ENCODE measurements at regions of chr3 and their contacts with region 1.

Region 1: DNA sequence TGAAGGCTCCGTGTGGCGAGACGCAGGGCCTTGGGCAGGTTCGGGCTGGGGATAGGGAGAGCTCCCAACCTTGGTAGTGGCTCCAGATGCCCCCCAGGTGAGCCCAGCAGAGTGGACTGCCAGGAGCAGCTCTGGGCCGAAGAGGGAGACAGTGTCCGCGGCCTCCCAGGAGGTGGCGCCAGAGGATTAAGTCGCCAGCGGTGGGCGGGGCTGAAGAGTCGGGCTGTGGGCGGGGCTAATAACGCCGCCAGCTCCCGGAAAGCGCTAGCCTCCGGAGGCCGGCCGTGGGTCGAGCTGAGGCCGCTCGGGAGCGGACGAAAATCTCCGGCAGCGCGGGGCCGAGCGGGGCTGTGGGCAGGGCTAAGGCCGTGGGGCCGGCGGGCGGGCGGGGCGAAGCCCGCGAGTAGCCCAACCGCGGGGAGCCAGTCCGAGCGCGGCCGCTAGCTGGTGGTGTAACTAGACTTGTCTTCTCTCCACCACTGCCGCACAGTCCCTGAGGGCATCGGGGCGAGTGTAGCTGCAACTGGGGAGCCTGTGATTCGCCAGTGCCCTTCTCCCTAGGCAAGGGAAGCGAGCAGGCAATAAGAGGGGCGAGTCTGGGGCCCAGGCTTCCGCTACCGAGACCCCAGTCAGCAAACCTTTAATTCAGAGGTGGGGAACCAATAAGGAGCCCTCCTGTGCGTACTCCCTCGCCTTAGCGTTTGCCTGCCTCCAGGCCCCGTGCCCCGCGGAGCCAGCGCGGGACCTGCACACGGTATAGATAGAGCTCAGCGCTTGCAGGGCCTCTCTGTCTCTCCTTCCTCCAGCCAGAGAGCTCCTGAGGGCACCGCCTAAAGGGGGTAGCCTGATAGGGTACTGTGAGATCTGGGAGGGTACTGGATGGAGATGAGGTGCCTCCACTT is 14.4 kb upstream of the BSN start:
- DNase-seq: peak; percentile 97
- ATAC-seq: peak; percentile 86
- H3K4me3 Mint-ChIP-seq: peak overlapping the region; percentile 72
- H3K27ac Mint-ChIP-seq: 0 out of 2 replicates have a peak overlapping the region, but pooled peaks have one; percentile 41
- H3K4me1 Mint-ChIP-seq: peaks cover 19% of the 10 kb centered on the region
- H3K27me3 Mint-ChIP-seq: peaks cover 23% of the 10 kb centered on the region
- CTCF ChIP-seq: peak; percentile 80

Region 2: DNA sequence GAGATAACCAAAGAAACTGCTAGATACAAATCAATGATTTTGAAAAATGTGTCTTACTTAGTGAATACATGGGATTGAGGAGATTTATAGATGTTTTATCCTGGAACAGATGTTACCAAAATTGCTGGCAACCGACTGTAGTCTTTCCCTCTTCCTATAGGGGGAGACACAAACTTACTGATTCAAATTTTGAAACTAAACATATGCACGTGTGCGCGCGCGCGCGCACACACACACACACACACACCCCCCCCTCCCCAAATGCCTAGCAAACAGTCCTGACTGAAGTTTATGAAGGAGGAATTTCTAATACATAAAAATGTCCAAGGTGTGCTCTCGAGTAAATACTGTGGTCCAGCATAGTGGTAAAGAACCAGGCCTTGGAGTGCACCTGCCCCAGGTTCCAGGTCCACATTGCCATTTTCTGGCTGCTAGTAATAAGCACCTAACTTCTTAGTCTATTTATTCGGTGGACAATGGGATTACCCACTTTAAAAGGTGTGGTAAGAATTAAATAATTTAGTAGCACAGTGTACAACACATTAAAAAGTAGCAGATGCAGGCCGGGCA is 244.3 kb before region 1 on chr3:
- CTCF ChIA-PET with region 1: no interaction called
- POLR2A ChIA-PET with region 1: no interaction called
- DNase-seq: peak; percentile 18
- ATAC-seq: no peak
- H3K4me3 Mint-ChIP-seq: no peak overlapping the region
- H3K27ac Mint-ChIP-seq: no peak overlapping the region
- H3K4me1 Mint-ChIP-seq: no peaks in the 10 kb centered on the region
- H3K27me3 Mint-ChIP-seq: no peaks in the 10 kb centered on the region
- CTCF ChIP-seq: peak; percentile 50; the same call in 1 of the 2 replicates

Region 3: DNA sequence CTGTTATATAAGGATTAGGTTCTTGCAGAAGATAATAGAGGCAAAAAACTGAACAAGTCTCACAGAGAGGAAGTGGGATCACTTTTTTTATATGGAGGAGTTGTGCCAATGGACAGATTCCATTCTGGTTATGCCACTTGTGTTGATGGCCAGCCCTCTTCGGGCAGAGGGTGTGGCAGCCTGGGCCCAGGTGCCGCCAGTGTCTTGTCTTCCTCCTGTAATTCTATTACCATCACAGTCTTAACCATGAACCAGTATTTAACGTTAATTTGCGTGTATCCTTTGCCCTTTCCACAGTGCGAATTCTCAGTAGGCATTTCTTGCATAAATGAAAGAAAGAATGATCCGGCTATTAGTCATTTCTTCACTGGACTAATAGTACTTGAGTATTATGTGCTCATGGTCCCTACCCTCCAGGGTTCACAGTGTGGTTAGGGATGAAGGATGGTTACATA is 193.1 kb before region 1 on chr3:
- CTCF ChIA-PET with region 1: no interaction called
- POLR2A ChIA-PET with region 1: no interaction called
- DNase-seq: no peak
- ATAC-seq: no peak
- H3K4me3 Mint-ChIP-seq: no peak overlapping the region
- H3K27ac Mint-ChIP-seq: no peak overlapping the region
- H3K4me1 Mint-ChIP-seq: peaks cover 2% of the 10 kb centered on the region; the same call in 1 of the 2 replicates
- H3K27me3 Mint-ChIP-seq: no peaks in the 10 kb centered on the region
- CTCF ChIP-seq: no peak

Region 4: DNA sequence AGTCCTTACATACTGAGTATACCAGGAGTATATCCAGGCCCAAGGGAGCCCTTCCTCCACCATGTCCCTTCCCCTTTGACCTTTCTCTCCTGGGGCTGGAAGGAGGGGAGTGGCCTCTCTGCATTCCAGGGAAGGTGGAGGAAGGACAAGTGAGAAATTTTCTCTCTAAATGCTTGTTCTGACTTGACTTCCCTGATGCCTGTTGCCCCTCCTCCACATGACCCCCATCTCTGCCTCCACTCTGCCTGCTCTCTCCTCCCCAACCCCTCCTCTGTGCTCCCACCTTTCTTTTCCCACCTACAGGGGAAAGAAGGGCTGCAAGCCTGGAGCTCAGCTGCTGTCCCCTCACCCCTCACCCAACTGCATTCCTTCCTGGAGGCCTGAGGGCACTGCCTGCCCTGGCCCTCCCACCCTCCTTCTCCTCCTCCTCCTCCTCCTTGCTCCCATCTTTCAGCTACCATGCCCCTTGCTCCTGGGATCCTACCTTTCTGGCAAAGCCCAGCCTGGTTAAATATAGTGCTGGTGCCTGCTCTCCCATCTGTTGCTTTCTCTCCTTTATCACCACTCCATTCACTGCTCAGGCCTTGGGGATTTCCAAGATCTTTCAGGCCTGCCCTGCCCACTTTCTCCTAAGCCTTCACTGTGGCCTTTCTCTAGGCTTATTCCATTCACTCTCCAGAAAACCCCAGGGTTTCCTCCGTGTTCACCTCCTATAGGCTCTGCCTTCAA is 78.3 kb before region 1 on chr3:
- CTCF ChIA-PET with region 1: interaction called, 23 read pairs
- POLR2A ChIA-PET with region 1: interaction called, 4 read pairs
- DNase-seq: peak; percentile 67
- ATAC-seq: peak; percentile 79
- H3K4me3 Mint-ChIP-seq: peak overlapping the region; percentile 26
- H3K27ac Mint-ChIP-seq: peak overlapping the region; percentile 99
- H3K4me1 Mint-ChIP-seq: peaks cover 47% of the 10 kb centered on the region
- H3K27me3 Mint-ChIP-seq: no peaks in the 10 kb centered on the region; the same call in 1 of the 2 replicates
- CTCF ChIP-seq: no peak

Region 5: DNA sequence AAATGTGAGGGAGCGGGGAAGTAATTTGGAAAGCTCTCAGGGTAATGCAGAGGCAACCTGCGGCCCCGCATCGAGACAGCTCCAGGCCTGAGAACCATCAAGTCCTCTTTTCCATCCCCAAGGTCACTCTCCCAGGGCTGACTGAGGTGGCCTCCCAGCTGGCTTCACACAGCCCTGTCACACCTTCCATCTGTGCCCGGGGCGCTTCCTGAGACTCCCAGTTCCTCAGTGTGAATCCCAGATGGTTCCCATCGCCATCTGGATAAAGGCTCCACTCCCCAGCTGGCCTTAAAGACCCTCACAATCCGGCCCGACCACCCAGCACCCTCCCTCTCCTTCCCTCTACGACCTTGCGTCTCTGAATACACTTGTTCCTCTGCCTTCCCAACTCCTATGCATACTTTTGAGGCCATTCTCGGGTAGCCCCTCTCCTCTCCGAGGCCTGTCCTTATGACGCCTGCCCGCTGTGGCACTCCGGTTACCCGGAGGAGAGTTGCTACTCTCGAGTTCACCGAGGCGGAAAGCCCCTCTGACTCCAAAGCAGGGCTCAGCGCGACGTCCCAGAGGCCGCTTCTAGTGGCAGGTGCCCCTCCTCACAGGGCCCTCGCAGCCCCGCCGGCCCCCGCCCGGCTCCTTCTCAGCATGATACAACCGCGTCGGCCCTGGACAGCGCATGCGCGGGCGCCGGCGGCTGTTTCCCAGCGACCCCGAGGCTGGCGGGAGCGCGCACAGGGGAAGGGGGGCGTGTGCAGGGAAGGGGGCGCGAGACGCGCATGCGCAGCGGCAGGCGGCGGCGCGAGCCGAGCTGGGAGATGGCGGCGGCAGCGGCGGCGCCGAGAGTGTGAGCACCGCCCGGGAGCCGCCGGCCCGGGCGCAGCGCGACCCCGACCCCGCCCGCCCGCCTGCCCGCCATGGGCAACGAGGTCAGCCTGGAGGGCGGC is 14.1 kb after region 1 on chr3 and contains the start of gene BSN:
- CTCF ChIA-PET with region 1: interaction called, 70 read pairs
- POLR2A ChIA-PET with region 1: interaction called, 14 read pairs
- DNase-seq: peak; percentile 93
- ATAC-seq: peak; percentile 75
- H3K4me3 Mint-ChIP-seq: peak within 1 kb of the TSS; percentile 99
- H3K27ac Mint-ChIP-seq: peak within 1 kb of the TSS; percentile 97
- H3K4me1 Mint-ChIP-seq: peaks cover 17% of the 10 kb centered on the region
- H3K27me3 Mint-ChIP-seq: peaks cover 25% of the 10 kb centered on the region
- CTCF ChIP-seq: no peak
- total RNA-seq, gene BSN: 1.7 to 2.8 TPM (median 2.4 TPM) in 3 replicates

Region 6: DNA sequence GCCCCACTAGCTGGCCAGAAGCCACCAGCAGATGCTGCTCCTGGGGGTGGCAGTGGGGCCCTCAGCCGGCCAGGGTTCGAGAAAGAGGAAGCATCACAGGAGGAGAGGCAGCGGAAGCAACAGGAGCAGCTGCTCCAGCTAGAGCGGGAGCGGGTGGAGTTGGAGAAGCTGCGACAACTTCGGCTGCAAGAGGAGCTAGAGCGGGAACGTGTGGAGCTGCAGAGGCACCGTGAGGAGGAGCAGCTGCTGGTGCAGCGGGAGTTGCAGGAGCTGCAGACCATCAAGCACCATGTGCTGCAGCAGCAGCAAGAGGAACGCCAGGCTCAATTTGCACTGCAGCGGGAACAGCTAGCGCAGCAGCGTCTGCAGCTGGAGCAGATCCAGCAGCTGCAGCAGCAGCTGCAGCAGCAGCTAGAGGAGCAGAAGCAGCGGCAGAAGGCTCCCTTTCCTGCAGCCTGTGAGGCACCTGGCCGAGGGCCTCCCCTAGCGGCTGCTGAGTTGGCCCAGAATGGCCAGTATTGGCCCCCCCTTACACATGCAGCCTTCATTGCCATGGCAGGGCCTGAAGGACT is 116.7 kb after region 1 on chr3:
- CTCF ChIA-PET with region 1: interaction called, 22 read pairs
- POLR2A ChIA-PET with region 1: no interaction called
- DNase-seq: no peak
- ATAC-seq: no peak
- H3K4me3 Mint-ChIP-seq: no peak overlapping the region
- H3K27ac Mint-ChIP-seq: no peak overlapping the region
- H3K4me1 Mint-ChIP-seq: no peaks in the 10 kb centered on the region
- H3K27me3 Mint-ChIP-seq: no peaks in the 10 kb centered on the region
- CTCF ChIP-seq: no peak

Region 7: GRCh38 chr3:49703443-49703927 is 163.6 kb after region 1 on chr3:
- CTCF ChIA-PET with region 1: interaction called, 55 read pairs
- POLR2A ChIA-PET with region 1: no interaction called
- DNase-seq: peak; percentile 75
- ATAC-seq: peak; percentile 91
- H3K4me3 Mint-ChIP-seq: no peak overlapping the region
- H3K27ac Mint-ChIP-seq: no peak overlapping the region; the same call in 1 of the 2 replicates
- H3K4me1 Mint-ChIP-seq: peaks cover 16% of the 10 kb centered on the region
- H3K27me3 Mint-ChIP-seq: no peaks in the 10 kb centered on the region
- CTCF ChIP-seq: peak; percentile 70

Region 8: DNA sequence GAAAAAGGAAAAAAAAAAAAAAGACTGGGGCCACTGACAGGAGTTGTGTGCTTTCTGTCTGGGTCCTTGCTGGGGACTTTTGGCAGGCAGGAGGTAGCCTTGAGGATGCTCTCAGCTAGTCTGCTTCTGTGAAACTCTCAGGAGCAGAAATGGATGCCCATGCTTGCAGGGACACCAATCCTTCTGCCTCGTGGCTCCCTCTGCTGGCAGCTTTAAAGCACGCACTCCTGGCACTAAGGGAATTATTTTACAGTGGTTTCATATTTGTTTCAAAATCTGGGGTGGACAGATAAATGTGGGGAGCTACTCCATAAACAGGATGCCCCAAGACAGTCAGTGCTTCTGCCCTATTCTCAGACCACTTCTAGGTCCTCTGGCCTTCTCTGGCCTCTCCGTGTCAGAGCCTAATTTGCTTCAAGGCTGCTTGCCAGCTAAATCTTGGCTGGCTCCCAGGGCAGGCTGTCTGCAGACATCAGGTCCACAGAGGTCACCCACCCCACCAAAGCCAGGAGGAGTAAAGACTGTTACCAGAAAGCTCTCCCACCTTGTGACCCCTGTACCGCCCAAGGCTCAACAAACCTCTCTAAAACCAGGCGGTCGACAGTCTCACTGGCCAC is 299.4 kb after region 1 on chr3:
- CTCF ChIA-PET with region 1: interaction called, 11 read pairs
- POLR2A ChIA-PET with region 1: no interaction called
- DNase-seq: peak; percentile 78
- ATAC-seq: peak; percentile 54
- H3K4me3 Mint-ChIP-seq: no peak overlapping the region
- H3K27ac Mint-ChIP-seq: no peak overlapping the region
- H3K4me1 Mint-ChIP-seq: peaks cover 17% of the 10 kb centered on the region
- H3K27me3 Mint-ChIP-seq: no peaks in the 10 kb centered on the region
- CTCF ChIP-seq: peak; percentile 65